ENCODE measurements at regions of chr17 and their contacts with region 1.

Region 1: GRCh38 chr17:58658804-58659713 is 32.8 kb downstream of the TEX14 start:
- DNase-seq: peak; percentile 83
- H3K4me3 Mint-ChIP-seq: peak overlapping the region; percentile 70
- H3K27ac Mint-ChIP-seq: peak overlapping the region; percentile 94
- H3K4me1 Mint-ChIP-seq: peaks cover 26% of the 10 kb centered on the region
- H3K27me3 Mint-ChIP-seq: peaks cover 13% of the 10 kb centered on the region

Region 2: DNA sequence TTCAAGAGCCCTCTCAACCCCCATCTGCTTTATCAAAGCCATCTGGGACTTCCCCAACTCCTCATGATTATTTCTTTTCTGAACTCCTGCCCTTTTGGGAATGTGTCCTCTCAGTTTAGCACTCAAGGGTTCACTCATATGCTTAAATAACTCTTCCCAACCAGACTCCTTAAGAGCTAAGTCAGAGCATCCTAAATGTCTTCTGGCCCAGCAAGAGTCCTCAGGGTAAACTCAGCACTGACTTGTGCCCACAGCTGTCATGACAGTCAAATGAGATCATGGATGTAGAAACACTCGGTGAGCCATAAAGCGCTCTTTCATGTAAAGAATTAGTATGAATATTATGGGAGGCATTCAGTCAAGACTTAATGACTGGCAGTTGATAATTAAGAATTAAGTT is 53.1 kb before region 1 on chr17:
- CTCF ChIA-PET with region 1: no interaction called
- POLR2A ChIA-PET with region 1: no interaction called
- DNase-seq: no peak
- H3K4me3 Mint-ChIP-seq: no peak overlapping the region
- H3K27ac Mint-ChIP-seq: no peak overlapping the region
- H3K4me1 Mint-ChIP-seq: peaks cover 10% of the 10 kb centered on the region
- H3K27me3 Mint-ChIP-seq: no peaks in the 10 kb centered on the region

Region 3: GRCh38 chr17:58643140-58643539 is 15.9 kb before region 1 on chr17:
- CTCF ChIA-PET with region 1: no interaction called
- POLR2A ChIA-PET with region 1: interaction called, 12 read pairs
- DNase-seq: no peak
- H3K4me3 Mint-ChIP-seq: no peak overlapping the region
- H3K27ac Mint-ChIP-seq: no peak overlapping the region
- H3K4me1 Mint-ChIP-seq: peaks cover 19% of the 10 kb centered on the region
- H3K27me3 Mint-ChIP-seq: no peaks in the 10 kb centered on the region

Region 4: DNA sequence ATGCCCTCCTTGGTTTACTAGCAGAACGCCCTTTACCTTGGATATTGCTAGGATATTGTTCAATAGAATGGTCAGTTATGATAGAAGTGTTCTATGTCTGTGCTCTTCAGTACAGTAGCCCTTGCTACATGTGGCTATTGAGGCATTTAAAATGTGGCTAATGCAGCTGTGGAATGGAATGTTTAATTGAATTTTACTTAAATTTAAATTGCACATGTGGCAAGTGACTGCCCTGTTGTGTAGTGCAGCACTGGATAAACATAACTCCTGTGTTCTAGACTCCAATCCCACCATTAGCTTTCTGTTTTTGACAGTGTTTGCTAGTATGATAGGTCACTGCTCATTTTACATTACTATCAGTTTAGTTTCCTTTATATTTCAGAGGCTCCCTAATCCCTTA is 63.2 kb after region 1 on chr17:
- CTCF ChIA-PET with region 1: no interaction called
- POLR2A ChIA-PET with region 1: no interaction called
- DNase-seq: no peak
- H3K4me3 Mint-ChIP-seq: no peak overlapping the region
- H3K27ac Mint-ChIP-seq: no peak overlapping the region
- H3K4me1 Mint-ChIP-seq: no peaks in the 10 kb centered on the region
- H3K27me3 Mint-ChIP-seq: no peaks in the 10 kb centered on the region